Activated CD4-positive, alpha-beta memory T cell treated with anti-CD3 and anti-CD28 coated beads, Interleukin-2, amount 10 ng/mL, durations not matched to agents 7 days and 5 days (primary cell): ENCODE measurements at regions of chr12 and their contacts with region 1.

Region 1: GRCh38 chr12:71746983-71747611 is 7.6 kb upstream of the RAB21 start:
- DNase-seq: peak; percentile 48
- H3K4me3 Mint-ChIP-seq: no peak overlapping the region
- H3K27ac Mint-ChIP-seq: no peak overlapping the region
- H3K4me1 Mint-ChIP-seq: no peaks in the 10 kb centered on the region
- H3K27me3 Mint-ChIP-seq: peaks cover 48% of the 10 kb centered on the region

Region 2: GRCh38 chr12:71415336-71416231 is 331.5 kb before region 1 on chr12:
- CTCF ChIA-PET with region 1: interaction called, 60 read pairs
- POLR2A ChIA-PET with region 1: no interaction called
- DNase-seq: no peak
- H3K4me3 Mint-ChIP-seq: no peak overlapping the region
- H3K27ac Mint-ChIP-seq: no peak overlapping the region
- H3K4me1 Mint-ChIP-seq: no peaks in the 10 kb centered on the region
- H3K27me3 Mint-ChIP-seq: peaks cover 15% of the 10 kb centered on the region

Region 3: GRCh38 chr12:71626098-71626497 is 121.0 kb before region 1 on chr12:
- CTCF ChIA-PET with region 1: interaction called, 11 read pairs
- POLR2A ChIA-PET with region 1: no interaction called
- DNase-seq: no peak
- H3K4me3 Mint-ChIP-seq: no peak overlapping the region
- H3K27ac Mint-ChIP-seq: peak overlapping the region; percentile 37
- H3K4me1 Mint-ChIP-seq: peaks cover 20% of the 10 kb centered on the region
- H3K27me3 Mint-ChIP-seq: no peaks in the 10 kb centered on the region

Region 4: GRCh38 chr12:71938728-71939385 is 191.8 kb after region 1 on chr12 and contains the start of gene TPH2:
- CTCF ChIA-PET with region 1: no interaction called
- POLR2A ChIA-PET with region 1: no interaction called
- DNase-seq: peak; percentile 55
- H3K4me3 Mint-ChIP-seq: no peak within 1 kb of the TSS
- H3K27ac Mint-ChIP-seq: no peak within 1 kb of the TSS
- H3K4me1 Mint-ChIP-seq: peaks cover 5% of the 10 kb centered on the region
- H3K27me3 Mint-ChIP-seq: peaks cover 38% of the 10 kb centered on the region
- total RNA-seq, gene TPH2: not detected